CD4-positive, alpha-beta T cell (primary cell): ENCODE measurements at regions of chr1 and their contacts with region 1.

Region 1: GRCh38 chr1:7783826-7784491 is at the start of gene PER3:
- DNase-seq: peak; percentile 79 to 96 (median 87)
- ATAC-seq: peak; percentile 86
- H3K4me3 ChIP-seq: peak within 1 kb of the TSS; percentile 69
- H3K4me3 Mint-ChIP-seq: peak within 1 kb of the TSS; percentile 79
- H3K27ac ChIP-seq: peak within 1 kb of the TSS; percentile 73 to 91
- H3K27ac Mint-ChIP-seq: peak within 1 kb of the TSS; percentile 78
- H3K4me1 ChIP-seq: peaks cover 34% of the 10 kb centered on the region
- H3K4me1 Mint-ChIP-seq: peaks cover 37% of the 10 kb centered on the region
- H3K27me3 ChIP-seq: no peaks in the 10 kb centered on the region
- H3K27me3 Mint-ChIP-seq: no peaks in the 10 kb centered on the region
- CTCF ChIP-seq: no peak
- total RNA-seq, gene PER3: 10.1 to 11.4 TPM

Region 2: GRCh38 chr1:7704214-7705047 is 79.5 kb before region 1 on chr1:
- CTCF ChIA-PET with region 1: no interaction called
- POLR2A ChIA-PET with region 1: no interaction called
- intact Hi-C with region 1: loop called in 1 of 2 experiments (anchors 2 kb)
- DNase-seq: peak; percentile 81 to 95 (median 89)
- ATAC-seq: peak; percentile 91
- H3K4me3 ChIP-seq: peak overlapping the region; percentile 54
- H3K4me3 Mint-ChIP-seq: peak overlapping the region; percentile 88
- H3K27ac ChIP-seq: no peak overlapping the region
- H3K27ac Mint-ChIP-seq: peak overlapping the region; percentile 75
- H3K4me1 ChIP-seq: peaks cover 20% of the 10 kb centered on the region
- H3K4me1 Mint-ChIP-seq: peaks cover 27% of the 10 kb centered on the region
- H3K27me3 ChIP-seq: peaks cover 24 to 51% of the 10 kb centered on the region in 2 experiments
- H3K27me3 Mint-ChIP-seq: peaks cover 63% of the 10 kb centered on the region
- CTCF ChIP-seq: no peak

Region 3: DNA sequence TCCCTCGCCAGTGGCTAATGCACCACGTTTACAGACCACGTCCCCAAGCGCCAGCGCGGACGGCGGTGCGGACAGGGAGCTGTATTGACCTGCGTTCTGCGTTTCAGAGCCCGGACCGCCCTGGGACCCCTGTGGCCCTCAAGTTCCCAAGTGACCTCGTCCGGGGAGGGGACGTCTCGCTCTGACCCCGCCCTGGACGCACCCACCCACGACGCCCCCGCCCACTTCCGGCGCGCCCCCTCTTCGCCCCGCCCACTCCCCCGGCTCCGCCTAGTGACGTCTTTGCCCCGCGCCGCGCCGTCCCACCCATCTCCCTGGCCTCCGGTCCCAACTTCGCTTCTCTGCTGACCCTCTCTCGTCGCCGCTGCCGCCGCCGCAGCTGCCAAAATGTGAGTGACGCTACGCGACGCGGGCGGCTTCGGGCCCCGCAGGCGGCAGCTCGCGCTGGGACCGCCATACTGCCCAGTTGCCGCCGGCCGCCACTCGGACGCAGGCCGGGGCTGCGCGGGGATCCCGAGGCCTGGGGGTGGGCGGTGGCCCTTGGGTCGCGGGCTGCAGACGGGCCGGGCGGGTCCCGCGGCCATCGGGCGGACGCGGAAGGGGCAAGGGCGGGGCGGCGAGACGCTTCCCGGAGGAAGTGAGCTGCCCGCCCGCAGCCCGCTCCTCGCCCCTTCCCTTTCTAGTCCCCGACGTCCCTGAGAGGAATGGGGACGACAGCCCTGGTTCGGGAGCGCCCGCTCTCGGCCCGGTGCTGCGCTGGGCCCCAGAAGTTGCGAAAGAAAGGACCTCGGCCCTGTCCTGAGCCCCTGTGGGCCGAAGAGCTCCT is 12.7 kb before region 1 on chr1 and contains the start of gene VAMP3:
- CTCF ChIA-PET with region 1: no interaction called
- POLR2A ChIA-PET with region 1: interaction called, 19 read pairs
- intact Hi-C with region 1: loop called in 1 of 2 experiments (anchors 1 kb)
- DNase-seq: peak; percentile 74 to 90 (median 83)
- ATAC-seq: peak; percentile 90
- H3K4me3 ChIP-seq: peak within 1 kb of the TSS; percentile 87
- H3K4me3 Mint-ChIP-seq: peak within 1 kb of the TSS; percentile 96
- H3K27ac ChIP-seq: peak within 1 kb of the TSS in 1 of 2 donors; percentile 65
- H3K27ac Mint-ChIP-seq: peak within 1 kb of the TSS; percentile 87
- H3K4me1 ChIP-seq: peaks cover 21% of the 10 kb centered on the region
- H3K4me1 Mint-ChIP-seq: peaks cover 51% of the 10 kb centered on the region
- H3K27me3 ChIP-seq: no peaks in the 10 kb centered on the region
- H3K27me3 Mint-ChIP-seq: peaks cover 4% of the 10 kb centered on the region
- CTCF ChIP-seq: no peak
- total RNA-seq, gene VAMP3: 76.9 to 87.7 TPM

Region 4: DNA sequence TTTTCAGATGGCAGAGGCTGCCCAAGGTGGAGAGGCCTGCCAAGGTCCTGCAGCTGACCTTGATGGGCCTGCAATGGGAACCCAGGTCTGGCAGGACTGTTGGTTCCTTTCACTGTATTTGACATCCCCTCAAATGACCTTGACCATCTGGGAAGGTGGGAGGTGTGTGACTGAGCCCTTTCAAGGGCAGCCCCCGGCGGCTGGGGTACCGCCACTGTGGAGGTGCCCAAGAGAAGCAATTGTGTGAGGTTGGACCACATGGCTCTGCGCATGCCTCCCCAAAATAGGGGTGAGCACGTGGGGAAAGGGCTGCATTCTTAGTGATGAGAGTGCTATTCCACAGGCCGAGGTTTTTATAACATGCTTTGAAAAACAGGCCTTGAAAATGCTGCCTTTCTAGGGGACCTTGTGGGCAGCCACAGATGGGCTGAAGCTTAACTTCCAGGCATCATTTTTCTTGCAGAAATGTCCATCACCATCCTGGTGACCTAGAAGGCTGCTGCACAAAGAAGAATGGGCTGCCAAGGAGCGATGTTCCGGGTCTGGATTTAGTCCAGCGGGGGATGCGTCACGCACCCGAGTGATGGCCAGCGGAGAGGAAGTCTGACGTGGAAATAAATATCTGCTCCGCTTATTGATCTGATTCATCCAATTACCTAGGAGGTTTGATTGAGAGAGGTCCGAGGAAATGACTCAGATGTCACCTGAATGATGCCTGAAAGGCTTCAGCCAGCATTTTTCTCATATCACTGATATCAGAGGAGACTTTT is 85.4 kb after region 1 on chr1:
- CTCF ChIA-PET with region 1: no interaction called
- POLR2A ChIA-PET with region 1: no interaction called
- intact Hi-C with region 1: no loop called
- DNase-seq: no peak
- ATAC-seq: no peak
- H3K4me3 ChIP-seq: no peak overlapping the region
- H3K4me3 Mint-ChIP-seq: no peak overlapping the region
- H3K27ac ChIP-seq: no peak overlapping the region
- H3K27ac Mint-ChIP-seq: no peak overlapping the region
- H3K4me1 ChIP-seq: no peaks in the 10 kb centered on the region
- H3K4me1 Mint-ChIP-seq: no peaks in the 10 kb centered on the region
- H3K27me3 ChIP-seq: no peaks in the 10 kb centered on the region
- H3K27me3 Mint-ChIP-seq: no peaks in the 10 kb centered on the region
- CTCF ChIP-seq: no peak

Region 5: DNA sequence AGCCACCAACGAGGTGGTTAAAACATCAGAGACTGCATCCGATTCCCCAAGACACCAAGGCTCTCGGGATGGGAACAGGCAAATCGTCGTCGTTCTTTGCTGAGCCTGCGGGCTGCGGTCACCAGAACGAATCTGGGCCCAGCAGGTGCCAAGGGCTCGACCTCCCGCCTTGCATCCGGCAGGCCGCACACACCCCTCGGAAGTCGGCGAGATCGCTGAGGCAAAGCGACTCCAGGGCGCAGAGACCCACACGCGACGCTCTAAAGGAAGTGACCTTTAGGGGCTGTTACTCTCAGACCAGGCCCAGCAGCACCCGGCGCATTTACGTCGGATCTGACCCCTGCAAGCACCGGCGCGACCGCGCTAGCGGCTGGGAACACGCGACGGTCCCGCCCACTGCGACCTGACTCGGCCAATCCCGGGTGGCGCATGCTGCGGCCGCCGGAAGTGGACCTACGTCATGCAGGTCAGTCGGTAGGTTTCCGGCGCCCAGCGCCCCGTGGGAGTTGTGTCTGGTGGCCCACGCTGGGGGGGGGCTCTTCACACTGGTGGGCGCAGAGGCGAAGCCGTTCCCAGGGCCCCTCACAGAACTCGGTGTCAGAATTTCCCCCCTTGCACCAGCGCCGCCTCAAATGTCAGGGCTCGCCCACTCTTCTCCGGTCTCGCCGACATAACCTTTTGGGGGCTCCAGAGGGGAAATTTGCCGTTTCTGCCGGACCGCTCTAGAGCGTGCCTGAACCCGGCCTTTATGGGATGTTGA is 170.1 kb after region 1 on chr1:
- CTCF ChIA-PET with region 1: no interaction called
- POLR2A ChIA-PET with region 1: no interaction called
- intact Hi-C with region 1: loop called in 1 of 2 experiments (anchors 10 kb)
- DNase-seq: peak; percentile 31 to 88 (median 66)
- ATAC-seq: peak; percentile 59
- H3K4me3 ChIP-seq: peak overlapping the region; percentile 88
- H3K4me3 Mint-ChIP-seq: peak overlapping the region; percentile 93
- H3K27ac ChIP-seq: peak overlapping the region; percentile 83 to 93
- H3K27ac Mint-ChIP-seq: peak overlapping the region; percentile 89
- H3K4me1 ChIP-seq: peaks cover 43% of the 10 kb centered on the region
- H3K4me1 Mint-ChIP-seq: peaks cover 46% of the 10 kb centered on the region
- H3K27me3 ChIP-seq: no peaks in the 10 kb centered on the region
- H3K27me3 Mint-ChIP-seq: no peaks in the 10 kb centered on the region
- CTCF ChIP-seq: no peak

Region 6: GRCh38 chr1:8817406-8818324 is 1033.7 kb after region 1 on chr1 and contains the start of gene RERE:
- CTCF ChIA-PET with region 1: no interaction called
- POLR2A ChIA-PET with region 1: no interaction called
- intact Hi-C with region 1: loop called in 1 of 2 experiments (anchors 10 kb)
- DNase-seq: peak; percentile 93 to 99 (median 96)
- ATAC-seq: peak; percentile 95
- H3K4me3 ChIP-seq: peak within 1 kb of the TSS; percentile 96
- H3K4me3 Mint-ChIP-seq: peak within 1 kb of the TSS; percentile 92
- H3K27ac ChIP-seq: peak within 1 kb of the TSS; percentile 80 to 83
- H3K27ac Mint-ChIP-seq: peak within 1 kb of the TSS; percentile 86
- H3K4me1 ChIP-seq: peaks cover 20% of the 10 kb centered on the region
- H3K4me1 Mint-ChIP-seq: peaks cover 44% of the 10 kb centered on the region
- H3K27me3 ChIP-seq: peaks cover 0 to 4% of the 10 kb centered on the region in 2 experiments
- H3K27me3 Mint-ChIP-seq: peaks cover 11% of the 10 kb centered on the region
- CTCF ChIP-seq: no peak
- total RNA-seq, gene RERE: 78.4 to 84.0 TPM